ENCODE measurements at regions of chr1 and their contacts with region 1.

Region 1: DNA sequence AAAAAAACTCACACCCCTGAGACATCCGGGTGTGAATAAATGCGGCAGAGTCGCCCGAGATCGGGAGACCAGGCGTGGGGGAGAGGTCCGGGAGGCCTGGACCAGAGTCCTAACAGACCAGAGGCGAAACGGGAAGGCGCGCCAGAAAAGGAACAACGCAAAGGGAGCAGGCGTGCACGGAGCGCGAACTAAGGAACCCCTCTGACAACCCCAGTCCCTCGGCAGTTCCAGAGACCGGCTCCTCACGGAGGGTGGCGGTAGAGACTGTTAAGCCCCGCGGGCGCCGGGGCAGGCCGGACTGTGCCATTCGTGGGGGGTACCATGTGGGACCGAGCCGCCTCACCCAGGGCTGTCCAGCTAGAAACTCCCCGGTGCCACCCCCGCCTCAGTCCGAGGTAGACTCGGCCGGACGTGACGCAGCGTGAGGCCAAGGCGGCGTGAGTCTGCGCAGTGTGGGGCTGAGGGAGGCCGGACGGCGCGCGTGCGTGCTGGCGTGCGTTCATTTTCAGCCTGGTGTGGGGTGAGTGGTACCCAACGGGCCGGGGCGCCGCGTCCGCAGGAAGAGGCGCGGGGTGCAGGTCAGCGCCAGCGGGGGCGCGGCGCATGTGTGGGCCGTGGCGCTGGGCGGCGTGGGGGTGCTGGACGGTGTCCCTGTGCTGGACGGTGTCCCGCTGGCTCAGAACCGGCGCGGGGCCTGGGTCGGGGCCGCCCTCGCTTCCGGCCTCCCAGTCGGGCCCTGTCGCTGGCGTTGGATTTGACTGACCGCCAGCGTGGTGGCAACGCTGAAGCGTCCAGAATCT is at the start of gene PARK7:
- DNase-seq: peak; percentile 100
- H3K4me3 Mint-ChIP-seq: peak within 1 kb of the TSS; percentile 100
- H3K27ac Mint-ChIP-seq: peak within 1 kb of the TSS; percentile 100
- H3K4me1 Mint-ChIP-seq: peaks cover 44% of the 10 kb centered on the region
- H3K27me3 Mint-ChIP-seq: no peaks in the 10 kb centered on the region
- total RNA-seq, gene PARK7: 498 and 514 TPM in 2 replicates

Region 2: DNA sequence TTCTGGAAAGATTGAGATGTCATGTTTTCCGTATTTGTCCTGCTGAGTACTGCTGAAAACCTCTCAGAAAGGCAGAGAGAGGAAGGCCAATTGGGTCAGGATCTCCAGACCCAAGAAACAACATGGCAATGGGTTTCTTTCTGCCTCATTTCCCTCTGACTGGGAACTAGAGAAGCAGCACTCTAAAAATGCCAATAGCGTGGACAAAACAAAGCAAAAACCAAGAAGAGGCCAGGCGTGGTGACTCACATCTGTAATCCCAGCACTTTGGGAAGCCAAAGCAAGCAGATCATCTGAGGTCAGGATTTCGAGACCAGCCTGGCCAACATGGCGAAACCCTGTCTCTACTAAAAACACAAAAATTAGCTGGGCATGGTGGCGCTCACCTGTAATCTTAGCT is 39.1 kb before region 1 on chr1:
- intact Hi-C with region 1: loop called (anchors 5 kb)
- DNase-seq: no peak
- H3K4me3 Mint-ChIP-seq: no peak overlapping the region
- H3K27ac Mint-ChIP-seq: peak overlapping the region; percentile 43
- H3K4me1 Mint-ChIP-seq: peaks cover 26% of the 10 kb centered on the region
- H3K27me3 Mint-ChIP-seq: no peaks in the 10 kb centered on the region

Region 3: GRCh38 chr1:7948960-7949359 is 12.5 kb before region 1 on chr1:
- intact Hi-C with region 1: loop called (anchors 1 kb)
- DNase-seq: peak; percentile 29
- H3K4me3 Mint-ChIP-seq: peak overlapping the region; percentile 27
- H3K27ac Mint-ChIP-seq: peak overlapping the region; percentile 71
- H3K4me1 Mint-ChIP-seq: peaks cover 41% of the 10 kb centered on the region
- H3K27me3 Mint-ChIP-seq: no peaks in the 10 kb centered on the region

Measured in activated T-helper 2 cell treated with anti-CD3 and anti-CD28 coated beads, Interferon-gamma antibody, Interleukin-2, Interleukin-4, amounts not matched to agents 10 μg/mL and 5 μg/mL and 100 μg/mL, durations not matched to agents 14 hours and 24 hours and 36 hours (primary cell).